Heart right ventricle (tissue), 16 donors: ENCODE measurements at regions of chr10 and their contacts with region 1.

Region 1: GRCh38 chr10:86017841-86018734 is 348.5 kb downstream of the GRID1 start:
- DNase-seq: peak; percentile 55 to 74
- ATAC-seq: peak; percentile 68 to 96 (median 94)
- H3K4me3 ChIP-seq: no peak overlapping the region
- H3K27ac ChIP-seq: peak overlapping the region in 3 of 10 donors; percentile 5 to 51 (median 28)
- H3K4me1 ChIP-seq: peaks cover 0 to 32% (median 13%) of the 10 kb centered on the region in 9 donors
- H3K27me3 ChIP-seq: peaks cover 0 to 3% (median 0%) of the 10 kb centered on the region in 7 donors
- CTCF ChIP-seq: no peak

Region 2: DNA sequence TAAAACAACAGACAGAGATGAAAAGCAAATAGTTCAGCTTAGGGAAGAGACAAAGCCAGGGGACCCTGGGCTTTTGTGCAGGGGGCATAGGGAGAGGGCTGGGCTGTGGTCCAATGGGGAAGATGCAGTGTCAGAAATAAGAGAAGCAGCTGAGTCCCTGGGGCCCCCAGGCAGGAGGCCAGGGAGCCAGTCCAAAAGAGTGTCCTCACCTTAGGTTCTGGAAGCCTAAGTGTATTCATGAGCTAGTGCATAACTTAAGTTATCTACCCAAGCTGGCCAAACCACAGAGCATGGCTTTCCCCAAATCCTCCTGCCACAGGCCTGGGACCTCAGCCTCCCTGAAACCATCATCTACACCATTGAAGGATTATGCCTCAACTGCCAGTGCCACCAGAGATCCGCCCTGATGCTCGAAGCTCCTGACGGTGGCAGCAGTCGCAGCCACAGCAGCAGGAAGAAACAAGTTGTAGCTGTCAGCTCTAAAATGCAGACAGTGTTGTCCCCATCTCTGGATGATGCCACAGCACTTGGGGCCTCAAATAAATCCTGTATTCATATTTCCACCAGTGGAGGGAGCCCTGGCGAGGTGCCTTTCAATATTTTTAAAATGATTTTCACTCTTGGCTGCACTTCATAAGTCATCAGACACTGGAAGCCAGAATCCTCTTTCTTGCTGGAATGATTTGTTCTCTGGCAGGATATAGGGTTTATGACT is 226.1 kb before region 1 on chr10:
- intact Hi-C with region 1: loop called in 1 of 10 experiments (anchors 10 kb)
- DNase-seq: no peak
- ATAC-seq: peak in 3 of 8 donors; percentile 16 to 62 (median 45)
- H3K4me3 ChIP-seq: no peak overlapping the region
- H3K27ac ChIP-seq: no peak overlapping the region
- H3K4me1 ChIP-seq: peaks cover 0 to 16% (median 5%) of the 10 kb centered on the region in 9 donors
- H3K27me3 ChIP-seq: no peaks in the 10 kb centered on the region
- CTCF ChIP-seq: peak in 6 of 9 donors; percentile 27 to 54 (median 40)